ENCODE measurements at regions of chr1 and their contacts with region 1.

Region 1: GRCh38 chr1:226121587-226122400 is 59.3 kb downstream of the H3-3A start:
- DNase-seq: peak; percentile 68
- H3K4me3 Mint-ChIP-seq: peak overlapping the region; percentile 76
- H3K27ac Mint-ChIP-seq: peak overlapping the region; percentile 50
- H3K4me1 Mint-ChIP-seq: peaks cover 22% of the 10 kb centered on the region
- H3K27me3 Mint-ChIP-seq: no peaks in the 10 kb centered on the region

Region 2: DNA sequence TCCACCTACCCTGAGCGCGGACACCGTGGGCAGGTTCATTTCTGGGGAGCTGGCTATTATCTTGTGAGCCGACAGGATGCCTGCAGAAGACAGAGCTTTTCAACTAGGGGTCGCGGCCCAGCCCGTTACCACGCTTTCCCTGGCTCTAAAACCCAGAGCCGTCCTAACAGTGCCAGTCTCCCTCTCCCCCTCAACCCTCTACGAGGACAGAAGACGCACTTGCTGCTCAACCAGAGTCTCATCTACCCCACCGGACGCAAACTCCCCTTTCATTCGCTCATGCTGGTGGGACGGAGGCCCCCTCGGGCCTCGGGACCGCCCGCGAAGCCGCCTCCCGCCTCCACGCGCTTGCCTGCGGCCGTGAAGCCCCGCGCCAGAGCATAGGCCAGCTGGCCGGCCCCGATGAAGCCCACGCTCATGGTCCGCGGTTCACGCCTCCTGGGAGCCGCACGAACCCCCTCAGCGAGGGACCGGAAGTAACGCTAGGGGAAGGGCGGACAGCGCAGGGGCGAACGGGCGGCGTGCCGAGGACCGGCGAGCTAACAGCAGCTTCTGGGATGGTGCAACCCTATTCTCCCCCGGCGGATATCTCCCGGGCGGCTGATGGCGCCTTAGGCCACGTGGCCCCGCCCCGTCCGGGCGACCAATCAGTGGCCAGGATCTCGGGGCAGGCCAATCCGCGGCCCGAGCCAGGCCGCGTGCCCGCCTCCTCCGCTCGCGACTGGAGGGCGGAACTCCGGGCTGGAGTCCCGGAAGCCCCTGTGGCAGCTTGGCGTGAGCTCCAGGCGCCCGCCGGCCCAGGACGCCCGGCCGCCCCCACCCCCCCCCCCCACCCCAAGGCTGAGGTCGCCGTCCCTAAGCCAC is 197.9 kb before region 1 on chr1 and contains the start of gene PYCR2:
- CTCF ChIA-PET with region 1: no interaction called
- intact Hi-C with region 1: loop called (anchors 1 kb)
- DNase-seq: peak; percentile 96
- H3K4me3 Mint-ChIP-seq: peak within 1 kb of the TSS; percentile 95
- H3K27ac Mint-ChIP-seq: peak within 1 kb of the TSS; percentile 90
- H3K4me1 Mint-ChIP-seq: peaks cover 59% of the 10 kb centered on the region
- H3K27me3 Mint-ChIP-seq: no peaks in the 10 kb centered on the region
- total RNA-seq, gene PYCR2: 143 to 149 TPM

Region 3: DNA sequence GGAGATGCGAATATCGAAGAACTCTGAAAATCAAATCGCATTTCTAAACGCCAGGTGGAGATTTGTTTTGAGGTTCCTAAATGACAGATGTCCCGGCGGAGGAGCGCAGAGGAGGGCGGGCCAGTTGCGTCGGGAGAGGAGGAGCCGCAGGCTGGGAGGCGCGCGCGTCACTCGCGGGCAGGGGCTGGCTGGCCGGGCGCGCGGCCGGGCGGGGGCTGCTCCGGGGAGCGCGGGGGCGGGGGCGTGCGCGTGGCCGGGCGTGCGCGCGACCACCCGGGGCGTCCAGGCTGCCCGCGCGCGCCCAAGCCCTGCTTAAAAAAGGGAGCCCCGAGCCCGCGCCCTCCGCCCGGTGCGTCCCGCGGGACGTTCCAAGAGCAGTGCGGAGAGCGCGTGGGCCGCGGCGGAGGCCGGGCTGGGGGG is 12.0 kb before region 1 on chr1:
- CTCF ChIA-PET with region 1: interaction called, 26 read pairs
- intact Hi-C with region 1: loop called (anchors 1 kb)
- DNase-seq: peak; percentile 85
- H3K4me3 Mint-ChIP-seq: peak overlapping the region; percentile 76
- H3K27ac Mint-ChIP-seq: peak overlapping the region; percentile 43
- H3K4me1 Mint-ChIP-seq: peaks cover 7% of the 10 kb centered on the region
- H3K27me3 Mint-ChIP-seq: no peaks in the 10 kb centered on the region

Region 4: DNA sequence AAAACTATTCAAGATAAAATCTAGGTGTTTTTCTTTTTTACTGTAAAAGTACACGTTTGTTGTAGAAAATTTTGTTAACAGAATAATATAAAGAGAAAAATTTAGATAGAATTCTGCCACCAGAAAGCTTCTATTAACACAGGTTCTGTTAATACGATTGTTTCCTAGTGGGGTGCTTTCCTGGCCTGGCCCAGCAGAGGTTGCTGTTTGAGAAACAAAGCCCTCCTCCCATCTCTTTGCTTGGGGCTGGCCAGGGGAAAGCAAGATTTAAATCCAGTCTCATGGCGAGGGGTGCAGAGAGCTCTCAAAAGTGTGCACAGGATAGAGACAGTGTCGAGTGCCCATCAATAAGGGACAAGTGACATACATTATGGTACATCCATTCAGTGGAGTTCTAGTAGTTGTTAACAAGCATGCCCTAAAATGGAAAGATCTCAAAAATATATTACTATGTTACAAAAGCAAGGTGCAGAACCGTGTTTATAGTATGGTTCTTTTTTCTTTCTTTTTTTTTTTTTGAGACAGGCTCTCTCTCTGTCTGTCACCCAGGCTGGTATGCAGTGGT is 79.3 kb after region 1 on chr1:
- CTCF ChIA-PET with region 1: interaction called, 211 read pairs
- intact Hi-C with region 1: loop called (anchors 1 kb)
- DNase-seq: peak; percentile 16
- H3K4me3 Mint-ChIP-seq: no peak overlapping the region
- H3K27ac Mint-ChIP-seq: no peak overlapping the region
- H3K4me1 Mint-ChIP-seq: no peaks in the 10 kb centered on the region
- H3K27me3 Mint-ChIP-seq: peaks cover 6% of the 10 kb centered on the region

Region 5: DNA sequence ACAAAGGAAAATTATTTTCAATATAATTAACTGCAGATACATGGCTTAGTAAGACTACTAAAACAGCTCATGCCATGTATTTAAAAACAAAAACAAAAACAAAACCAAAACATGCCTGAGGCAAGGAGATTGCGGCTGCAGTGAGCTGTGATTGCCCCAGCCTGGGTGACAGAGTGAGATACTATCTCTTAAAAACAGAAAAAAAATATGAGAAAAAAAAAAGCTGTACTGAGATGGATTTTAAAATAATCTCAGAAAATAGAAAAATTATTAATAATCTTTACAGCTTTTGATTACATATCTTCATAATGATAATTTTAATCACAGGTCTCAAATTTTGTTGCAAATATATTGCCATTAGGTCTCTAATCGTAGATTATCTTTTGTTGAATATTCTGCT is 211.2 kb after region 1 on chr1:
- CTCF ChIA-PET with region 1: interaction called, 65 read pairs
- intact Hi-C with region 1: loop called (anchors 1 kb)
- DNase-seq: no peak
- H3K4me3 Mint-ChIP-seq: no peak overlapping the region
- H3K27ac Mint-ChIP-seq: no peak overlapping the region
- H3K4me1 Mint-ChIP-seq: peaks cover 13% of the 10 kb centered on the region
- H3K27me3 Mint-ChIP-seq: no peaks in the 10 kb centered on the region

Measured in activated naive CD4-positive, alpha-beta T cell treated with anti-CD3 and anti-CD28 coated beads for 36 hours (primary cell).